Prostate gland (tissue), 2 donors: ENCODE measurements at regions of chr15 and their contacts with region 1.

Region 1: DNA sequence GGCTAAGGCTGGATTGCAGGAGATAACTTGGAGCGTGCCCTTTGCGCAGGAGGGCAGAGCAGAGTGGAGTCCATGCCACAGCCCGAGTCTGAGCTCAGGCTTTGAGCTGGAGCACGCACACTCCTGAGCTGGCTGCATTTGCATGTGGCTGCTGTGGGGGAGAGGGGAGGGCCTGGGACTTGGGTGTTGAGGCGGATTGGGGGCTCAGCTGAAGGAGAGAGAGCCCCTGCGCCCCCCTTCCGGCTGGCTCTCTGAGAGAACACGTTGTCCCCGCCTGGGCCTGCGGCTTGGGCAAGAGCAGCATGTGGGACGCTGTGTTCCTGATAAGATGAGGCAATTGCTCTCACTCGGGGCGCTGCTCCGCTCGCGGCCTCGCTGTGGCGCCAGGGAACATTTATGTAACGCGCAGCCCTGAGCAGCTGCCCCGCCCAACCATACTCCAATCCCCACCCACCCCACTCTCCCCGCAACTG is 39.1 kb downstream of the KLF13 start:
- DNase-seq: peak; percentile 94
- H3K4me3 ChIP-seq: peak overlapping the region; percentile 11 to 12
- H3K27ac ChIP-seq: peak overlapping the region; percentile 60 to 84
- H3K4me1 ChIP-seq: peaks cover 10% of the 10 kb centered on the region
- H3K27me3 ChIP-seq: no peaks in the 10 kb centered on the region
- CTCF ChIP-seq: peak in 2 of 4 experiments; percentile 43 to 51
- POLR2A ChIP-seq: peak; percentile 13

Region 2: GRCh38 chr15:31215490-31216214 is 150.0 kb before region 1 on chr15:
- intact Hi-C with region 1: loop called (anchors 10 kb)
- DNase-seq: peak; percentile 64
- H3K4me3 ChIP-seq: peak overlapping the region; percentile 36 to 48
- H3K27ac ChIP-seq: peak overlapping the region; percentile 87 to 88
- H3K4me1 ChIP-seq: peaks cover 16% of the 10 kb centered on the region
- H3K27me3 ChIP-seq: no peaks in the 10 kb centered on the region
- CTCF ChIP-seq: peak; percentile 78 to 86 (median 83)
- POLR2A ChIP-seq: no peak

Region 3: DNA sequence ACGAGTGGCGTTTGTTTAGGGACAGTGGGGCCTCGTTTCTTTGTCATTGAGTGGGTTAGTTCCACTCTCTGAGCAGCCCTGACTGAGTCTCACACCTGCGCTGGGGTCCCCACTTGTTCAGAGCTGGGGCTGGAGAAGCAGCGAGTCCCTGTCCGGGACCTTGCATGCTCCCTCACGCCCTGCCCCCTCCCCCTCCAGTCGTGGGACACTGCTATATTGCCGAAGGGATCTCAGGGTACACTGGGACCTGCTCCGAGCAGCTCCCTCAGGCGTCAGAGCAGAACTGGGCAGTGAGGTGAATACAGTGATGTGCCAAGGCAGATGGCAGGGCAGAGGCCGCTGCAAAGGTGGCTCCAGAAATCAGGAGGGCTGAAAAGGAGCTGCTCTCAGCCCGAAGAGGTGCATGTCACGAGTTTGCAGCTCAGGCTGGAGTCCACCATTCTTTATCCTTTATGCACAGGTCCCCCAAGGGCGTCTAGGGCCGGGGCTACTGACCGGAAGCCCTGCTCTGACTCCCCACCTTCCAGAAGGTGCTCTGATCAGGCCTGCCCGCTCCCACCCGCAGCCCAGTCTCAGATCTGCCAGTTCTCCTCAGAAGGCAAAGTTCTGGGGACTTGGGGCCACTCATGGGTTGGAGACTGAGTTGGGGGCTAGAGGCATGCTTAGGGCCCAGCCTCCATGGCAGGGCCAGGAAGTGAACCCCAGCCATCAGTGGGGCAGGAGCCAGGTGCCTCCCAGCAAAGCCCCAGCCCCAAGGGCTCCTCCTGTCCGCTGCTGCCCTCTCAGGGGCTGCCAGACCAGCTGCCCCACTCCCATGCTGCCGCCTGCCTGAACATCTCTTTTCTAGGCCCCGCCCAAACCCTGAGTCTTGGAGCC is 98.7 kb before region 1 on chr15:
- intact Hi-C with region 1: no loop called
- DNase-seq: peak; percentile 3
- H3K4me3 ChIP-seq: no peak overlapping the region
- H3K27ac ChIP-seq: no peak overlapping the region
- H3K4me1 ChIP-seq: peaks cover 6% of the 10 kb centered on the region
- H3K27me3 ChIP-seq: no peaks in the 10 kb centered on the region
- CTCF ChIP-seq: no peak
- POLR2A ChIP-seq: no peak

Region 4: DNA sequence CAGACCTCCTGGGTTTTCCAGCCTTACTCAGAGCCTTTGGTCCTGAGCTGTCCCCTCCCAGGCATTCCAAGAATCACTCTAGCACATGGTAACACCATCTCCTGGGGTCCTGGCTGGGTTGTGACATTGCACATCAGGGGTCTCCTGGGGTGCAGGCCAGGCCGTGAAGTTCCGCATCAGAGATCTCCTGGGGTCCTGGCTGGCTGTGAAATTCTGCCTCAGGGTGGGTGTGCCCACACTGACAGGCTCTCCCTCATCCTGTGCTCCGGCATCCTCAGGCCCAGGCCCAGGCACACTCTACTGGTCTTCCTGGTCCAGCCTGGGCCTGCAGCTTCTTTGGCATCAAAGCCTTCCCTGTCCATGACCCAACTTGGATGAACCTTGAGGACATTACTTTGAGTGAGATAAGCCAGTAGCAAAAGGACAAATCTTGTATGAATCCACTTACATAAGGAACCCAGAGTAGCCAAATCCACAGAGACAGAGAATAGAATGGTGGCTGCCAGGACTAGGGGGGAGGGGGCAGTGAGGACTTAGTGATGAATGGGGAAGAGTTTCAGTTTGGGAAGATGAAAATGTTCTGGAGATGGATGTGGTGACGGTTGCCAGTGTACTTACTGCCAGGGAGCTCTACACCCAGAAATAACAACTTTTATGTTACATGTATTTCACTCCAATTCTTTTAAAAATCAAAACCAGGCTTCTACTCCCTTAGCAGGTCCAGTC is 88.2 kb before region 1 on chr15:
- intact Hi-C with region 1: no loop called
- DNase-seq: peak; percentile 1
- H3K4me3 ChIP-seq: no peak overlapping the region
- H3K27ac ChIP-seq: no peak overlapping the region
- H3K4me1 ChIP-seq: peaks cover 6% of the 10 kb centered on the region
- H3K27me3 ChIP-seq: no peaks in the 10 kb centered on the region
- CTCF ChIP-seq: no peak
- POLR2A ChIP-seq: no peak

Region 5: GRCh38 chr15:31379042-31379441 is 13.4 kb after region 1 on chr15:
- intact Hi-C with region 1: no loop called
- DNase-seq: no peak
- H3K4me3 ChIP-seq: no peak overlapping the region
- H3K27ac ChIP-seq: peak overlapping the region; percentile 1 to 3
- H3K4me1 ChIP-seq: no peaks in the 10 kb centered on the region
- H3K27me3 ChIP-seq: no peaks in the 10 kb centered on the region
- CTCF ChIP-seq: no peak
- POLR2A ChIP-seq: no peak

Region 6: DNA sequence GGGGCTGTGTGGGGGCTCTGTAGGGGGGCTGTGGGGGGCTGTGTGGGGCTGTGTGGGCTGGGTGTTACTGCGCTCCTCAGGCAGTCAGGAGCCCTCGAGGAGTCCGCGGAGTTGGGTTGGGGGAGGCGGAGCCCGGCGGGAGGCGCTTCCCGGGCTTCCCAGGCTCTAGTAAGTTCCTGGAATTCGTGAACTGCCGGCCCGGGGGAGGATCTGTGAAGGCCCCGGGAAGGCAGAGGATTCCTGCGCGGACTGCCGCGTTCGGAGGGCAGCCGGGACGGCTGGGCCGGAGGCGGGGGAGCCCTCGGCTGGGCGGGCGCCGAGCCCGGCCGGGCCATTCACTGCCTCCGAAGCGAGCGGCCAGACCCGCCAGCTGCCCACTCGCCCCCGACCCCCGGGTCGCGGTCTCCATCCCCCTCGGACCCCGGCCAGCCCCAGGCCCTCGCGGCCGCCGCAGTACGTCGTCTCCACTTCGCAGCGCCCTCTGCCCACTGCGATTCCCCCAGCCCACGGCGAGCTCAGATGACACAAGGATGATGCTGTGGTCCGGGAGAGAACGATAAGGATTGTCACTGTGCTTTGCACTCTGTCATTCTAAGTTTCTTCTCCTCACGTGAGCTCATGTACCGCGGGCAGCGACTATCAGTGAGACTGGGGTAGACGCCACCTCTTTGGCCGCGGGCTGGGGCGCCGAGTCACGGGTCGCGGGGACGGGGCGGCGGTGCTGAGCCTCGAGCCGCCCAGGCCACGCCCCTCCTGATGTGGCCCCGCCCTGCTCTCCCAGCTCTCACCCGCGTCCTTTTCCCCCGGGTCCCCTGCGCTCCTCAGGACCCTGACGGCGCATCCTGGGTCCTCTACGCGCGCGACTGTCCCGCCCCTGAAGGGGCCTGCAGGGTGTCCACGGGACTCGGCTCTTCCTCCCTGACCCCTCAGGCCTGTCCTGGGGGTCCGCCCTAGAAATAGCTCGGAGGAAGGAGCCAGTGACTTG is 26.3 kb after region 1 on chr15:
- intact Hi-C with region 1: loop called (anchors 2 kb)
- DNase-seq: peak; percentile 75
- H3K4me3 ChIP-seq: peak overlapping the region; percentile 49 to 50
- H3K27ac ChIP-seq: peak overlapping the region; percentile 89 to 93
- H3K4me1 ChIP-seq: no peaks in the 10 kb centered on the region
- H3K27me3 ChIP-seq: no peaks in the 10 kb centered on the region
- CTCF ChIP-seq: no peak
- POLR2A ChIP-seq: peak; percentile 84

Region 7: GRCh38 chr15:31435261-31435911 is 69.7 kb after region 1 on chr15:
- intact Hi-C with region 1: loop called (anchors 2 kb)
- DNase-seq: peak; percentile 62
- H3K4me3 ChIP-seq: no peak overlapping the region
- H3K27ac ChIP-seq: peak overlapping the region; percentile 5 to 17
- H3K4me1 ChIP-seq: peaks cover 6% of the 10 kb centered on the region
- H3K27me3 ChIP-seq: no peaks in the 10 kb centered on the region
- CTCF ChIP-seq: peak; percentile 12 to 80 (median 62)
- POLR2A ChIP-seq: no peak

Region 8: GRCh38 chr15:31488426-31489204 is 122.9 kb after region 1 on chr15:
- intact Hi-C with region 1: loop called (anchors 10 kb)
- DNase-seq: peak; percentile 44
- H3K4me3 ChIP-seq: no peak overlapping the region
- H3K27ac ChIP-seq: no peak overlapping the region
- H3K4me1 ChIP-seq: peaks cover 8% of the 10 kb centered on the region
- H3K27me3 ChIP-seq: no peaks in the 10 kb centered on the region
- CTCF ChIP-seq: peak; percentile 81 to 94 (median 88)
- POLR2A ChIP-seq: no peak